ENCODE measurements at regions of chr5 and their contacts with region 1.

Region 1: GRCh38 chr5:115460472-115460871 is 84.1 kb downstream of the FEM1C start:
- DNase-seq: peak; percentile 78 to 91 (median 80)
- ATAC-seq: peak; percentile 87 to 94 (median 92)
- H3K4me3 ChIP-seq: no peak overlapping the region
- H3K27ac ChIP-seq: peak overlapping the region; percentile 45 to 90 (median 82)
- H3K4me1 ChIP-seq: peaks cover 0 to 62% (median 42%) of the 10 kb centered on the region in 12 donors
- H3K27me3 ChIP-seq: no peaks in the 10 kb centered on the region
- CTCF ChIP-seq: no peak
- POLR2A ChIP-seq: no peak

Region 2: GRCh38 chr5:115415143-115415491 is 45.4 kb before region 1 on chr5:
- intact Hi-C with region 1: loop called in 4 of 10 experiments (anchors 5 kb)
- DNase-seq: peak in 4 of 5 donors; percentile 40 to 70 (median 49)
- ATAC-seq: peak; percentile 24 to 84 (median 80)
- H3K4me3 ChIP-seq: no peak overlapping the region
- H3K27ac ChIP-seq: peak overlapping the region in 5 of 12 donors; percentile 3 to 68 (median 27)
- H3K4me1 ChIP-seq: peaks cover 0 to 33% (median 18%) of the 10 kb centered on the region in 12 donors
- H3K27me3 ChIP-seq: no peaks in the 10 kb centered on the region
- CTCF ChIP-seq: no peak
- POLR2A ChIP-seq: no peak

Region 3: DNA sequence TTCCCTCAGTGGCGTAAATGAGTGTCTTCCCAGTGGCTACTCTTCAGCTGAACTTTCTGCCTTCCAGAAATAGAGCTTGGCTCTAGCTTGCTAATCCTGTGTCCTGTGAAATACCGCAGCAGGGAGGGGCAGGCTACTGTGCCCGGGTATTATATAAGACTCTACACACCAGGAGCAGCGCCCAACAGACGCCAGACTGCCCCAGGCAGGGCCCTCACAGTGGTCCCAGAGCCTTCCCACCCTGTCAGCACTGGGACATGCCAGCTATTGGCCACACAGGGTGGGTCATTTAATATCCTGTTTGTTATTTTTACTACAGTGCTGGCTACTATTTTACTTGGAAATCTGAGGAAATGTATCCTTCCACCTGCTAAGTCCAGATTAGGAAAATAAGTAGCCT is 36.9 kb before region 1 on chr5:
- intact Hi-C with region 1: loop called in 6 of 10 experiments (anchors 2 to 5 kb)
- DNase-seq: peak; percentile 82 to 89 (median 85)
- ATAC-seq: peak; percentile 93 to 97 (median 95)
- H3K4me3 ChIP-seq: peak overlapping the region in 8 of 12 donors; percentile 5 to 34 (median 16)
- H3K27ac ChIP-seq: peak overlapping the region; percentile 67 to 97 (median 89)
- H3K4me1 ChIP-seq: peaks cover 4 to 63% (median 42%) of the 10 kb centered on the region in 12 donors
- H3K27me3 ChIP-seq: no peaks in the 10 kb centered on the region
- CTCF ChIP-seq: no peak
- POLR2A ChIP-seq: peak in 1 of 2 donors; percentile 57

Region 4: GRCh38 chr5:115429343-115429940 is 31.0 kb before region 1 on chr5:
- intact Hi-C with region 1: loop called in 4 of 10 experiments (anchors 5 kb)
- DNase-seq: no peak
- ATAC-seq: no peak
- H3K4me3 ChIP-seq: no peak overlapping the region
- H3K27ac ChIP-seq: no peak overlapping the region
- H3K4me1 ChIP-seq: peaks cover 0 to 27% (median 14%) of the 10 kb centered on the region in 12 donors
- H3K27me3 ChIP-seq: no peaks in the 10 kb centered on the region
- CTCF ChIP-seq: no peak
- POLR2A ChIP-seq: no peak

Region 5: DNA sequence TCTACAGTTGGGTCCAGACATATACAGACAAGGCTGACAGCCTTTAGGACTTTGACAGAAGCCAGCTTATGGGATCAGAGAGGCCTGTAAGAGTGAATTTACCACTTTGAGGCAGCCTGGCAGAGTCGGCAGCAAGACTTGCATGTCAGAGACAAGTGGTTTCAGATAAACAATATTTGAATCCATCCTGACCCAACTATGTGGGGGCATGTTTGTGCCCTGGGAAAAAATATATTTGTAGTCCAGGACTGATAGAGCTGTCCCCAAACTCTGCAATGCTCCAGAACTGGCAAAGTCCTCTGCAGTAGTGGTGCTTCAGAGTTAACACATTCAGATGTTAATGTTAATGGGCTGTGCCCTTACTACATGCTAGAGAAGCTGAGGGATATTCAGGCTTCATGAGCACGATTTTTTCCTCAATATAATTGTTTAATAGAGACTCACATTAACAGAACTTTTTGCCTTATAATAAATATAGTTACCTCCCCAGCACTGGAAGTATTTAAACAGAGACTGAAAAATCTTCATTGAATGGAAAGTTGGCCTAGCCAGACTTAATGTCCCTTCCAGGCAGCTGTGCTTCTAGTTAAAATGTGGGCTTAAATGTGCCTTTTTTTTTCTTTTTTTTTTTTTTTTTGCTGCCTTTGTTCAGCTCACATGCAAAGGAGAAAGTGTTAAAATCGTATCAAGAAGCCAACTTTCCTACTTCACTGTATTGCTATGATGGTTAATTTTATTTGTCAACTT is 41.2 kb after region 1 on chr5:
- intact Hi-C with region 1: loop called in 1 of 10 experiments (anchors 5 kb)
- DNase-seq: peak in 4 of 5 donors; percentile 25 to 52 (median 44)
- ATAC-seq: peak; percentile 76 to 93 (median 84)
- H3K4me3 ChIP-seq: no peak overlapping the region
- H3K27ac ChIP-seq: peak overlapping the region in 4 of 12 donors; percentile 9 to 32 (median 14)
- H3K4me1 ChIP-seq: peaks cover 0 to 16% (median 0%) of the 10 kb centered on the region in 12 donors
- H3K27me3 ChIP-seq: no peaks in the 10 kb centered on the region
- CTCF ChIP-seq: no peak
- POLR2A ChIP-seq: no peak